A549 (cell line): ENCODE measurements at regions of chr11 and their contacts with region 1.

Region 1: DNA sequence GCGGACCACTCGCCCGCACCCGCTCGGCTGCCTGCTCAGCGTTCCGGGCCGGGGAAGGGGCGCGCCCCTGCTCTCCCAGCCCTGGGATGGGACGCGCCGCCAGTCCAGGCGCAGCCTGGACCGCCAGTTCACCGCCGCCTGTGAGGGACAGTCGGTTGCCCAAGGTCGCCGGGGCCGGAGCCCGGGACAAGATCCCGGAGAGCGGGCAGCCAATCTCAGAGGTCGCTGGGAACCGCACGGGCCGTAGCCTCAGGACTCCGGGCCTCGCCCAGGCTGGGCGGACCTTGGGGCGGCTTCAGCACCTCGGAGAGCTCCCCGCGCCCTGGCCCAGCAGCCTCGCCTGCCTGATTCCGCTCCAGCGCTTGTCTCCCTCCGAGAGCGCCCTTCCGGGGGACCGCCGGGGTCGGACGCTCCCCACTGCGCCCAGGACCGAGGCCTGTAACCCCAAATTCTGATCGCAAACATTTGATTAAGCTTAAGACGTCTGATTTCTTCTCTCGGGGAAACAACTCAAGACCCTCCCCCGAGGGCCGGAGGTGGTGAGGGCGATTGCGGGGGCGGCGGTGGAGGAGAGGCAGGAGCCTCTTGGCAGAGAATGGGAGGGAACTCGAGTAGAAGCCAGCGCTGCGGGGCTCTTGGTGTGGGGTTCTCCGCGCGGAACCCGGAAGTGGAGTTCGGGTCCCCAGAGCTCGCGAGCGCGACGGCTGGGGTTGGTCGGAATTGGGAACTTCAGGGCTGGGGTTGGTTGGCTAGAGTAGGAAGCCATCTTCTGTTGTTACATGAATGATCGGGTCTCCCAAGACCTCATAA is 1.1 kb upstream of the CHRM4 start:
- DNase-seq: peak; percentile 74 to 87
- ATAC-seq: peak; percentile 52 to 73
- H3K4me3 ChIP-seq: peak overlapping the region; percentile 59
- H3K27ac ChIP-seq: peak overlapping the region in 1 of 2 experiments; percentile 63; a peak in 1 of 6 replicates
- H3K4me1 ChIP-seq: peaks cover 18% of the 10 kb centered on the region; the same call in 2 of the 3 replicates
- CTCF ChIP-seq: no peak
- EP300 ChIP-seq: no peak
- POLR2A ChIP-seq: no peak
- RAD21 ChIP-seq: no peak

Region 2: DNA sequence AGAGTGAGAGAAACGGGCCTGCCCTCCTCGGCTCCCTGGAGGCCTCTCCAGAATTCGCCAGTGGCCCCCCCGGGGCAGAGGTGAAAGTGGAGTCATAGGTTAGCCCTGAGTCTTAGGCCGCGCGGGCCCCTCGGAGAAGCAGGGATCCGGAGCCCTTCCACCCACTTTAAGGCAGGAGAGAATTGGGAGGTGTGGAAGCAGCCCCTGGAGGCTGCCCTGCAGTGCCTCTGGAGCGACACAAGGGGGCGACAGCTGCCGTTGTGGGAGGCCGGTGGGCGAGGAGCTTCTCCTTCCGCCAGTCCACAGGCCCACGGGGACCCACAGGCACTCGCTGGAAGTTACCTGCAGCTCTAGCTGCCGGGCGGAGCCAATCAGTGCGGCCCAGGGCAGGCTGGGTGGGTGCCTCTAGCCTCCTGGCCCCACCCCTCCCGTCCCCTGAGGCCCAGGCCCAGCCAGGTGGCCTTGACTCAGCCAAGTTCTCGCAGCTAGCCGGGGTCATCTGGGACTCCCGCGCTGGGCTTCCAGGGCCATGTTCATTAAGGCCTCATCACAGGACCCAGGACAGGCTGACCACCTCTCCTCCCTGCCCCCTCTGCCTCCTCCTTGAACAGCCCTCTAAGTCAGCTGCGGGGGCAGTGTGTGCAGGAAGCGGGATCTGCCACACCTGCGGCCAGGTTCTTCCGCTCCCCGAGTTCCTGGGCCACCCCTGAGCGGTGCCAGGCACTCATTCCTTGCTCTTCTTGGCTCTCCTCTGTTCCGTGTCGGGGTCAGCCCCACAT is 40.4 kb before region 1 on chr11:
- CTCF ChIA-PET with region 1: interaction called, 15 read pairs
- POLR2A ChIA-PET with region 1: no interaction called
- DNase-seq: peak in 1 of 2 experiments; percentile 46
- ATAC-seq: peak in 1 of 2 experiments; percentile 61; a peak in 3 of 6 replicates
- H3K4me3 ChIP-seq: no peak overlapping the region
- H3K27ac ChIP-seq: no peak overlapping the region
- H3K4me1 ChIP-seq: peaks cover 13% of the 10 kb centered on the region
- CTCF ChIP-seq: peak; percentile 51
- EP300 ChIP-seq: no peak
- POLR2A ChIP-seq: no peak
- RAD21 ChIP-seq: peak; percentile 26 to 31; a peak in 3 of 5 replicates

Region 3: DNA sequence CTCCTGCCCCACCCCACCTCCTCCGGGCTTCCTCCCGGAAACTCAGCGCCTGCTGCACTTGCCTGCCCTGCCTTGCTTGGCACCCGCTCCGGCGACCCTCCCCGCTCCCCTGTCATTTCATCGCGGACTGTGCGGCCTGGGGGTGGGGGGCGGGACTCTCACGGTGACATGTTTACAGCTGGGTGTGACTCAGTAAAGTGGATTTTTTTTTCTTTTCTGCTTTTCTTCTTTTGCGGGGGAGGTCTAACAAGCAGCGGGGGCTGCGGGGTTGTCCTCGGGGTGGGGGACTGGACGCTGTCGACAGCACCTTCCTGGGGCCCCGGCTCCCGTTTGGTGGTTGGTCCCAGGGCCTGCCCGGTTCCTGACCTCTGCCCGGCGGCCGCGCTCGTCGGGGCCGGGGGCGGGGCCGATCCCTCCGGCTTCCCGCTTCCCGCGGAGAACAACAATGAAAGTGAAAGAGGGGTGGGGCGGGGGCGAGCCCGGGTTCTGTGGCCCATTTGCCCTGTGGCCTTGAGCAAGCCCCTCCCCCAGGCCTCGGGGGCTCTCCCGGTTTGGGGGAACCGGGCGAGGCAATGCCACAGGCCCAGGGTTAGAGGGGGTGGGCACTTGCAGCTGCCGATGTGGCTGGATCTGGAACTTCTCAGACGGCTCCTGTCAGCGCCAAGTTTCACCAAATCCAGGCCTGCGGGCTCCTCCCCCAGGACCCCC is 12.1 kb before region 1 on chr11:
- CTCF ChIA-PET with region 1: interaction called, 220 read pairs
- POLR2A ChIA-PET with region 1: no interaction called
- DNase-seq: no peak
- ATAC-seq: peak in 1 of 2 experiments; percentile 50; a peak in 3 of 6 replicates
- H3K4me3 ChIP-seq: peak overlapping the region; percentile 48
- H3K27ac ChIP-seq: peak overlapping the region; percentile 37 to 85
- H3K4me1 ChIP-seq: peaks cover 11% of the 10 kb centered on the region
- CTCF ChIP-seq: no peak
- EP300 ChIP-seq: no peak
- POLR2A ChIP-seq: no peak
- RAD21 ChIP-seq: no peak

Region 4: GRCh38 chr11:46410021-46410420 is 17.4 kb after region 1 on chr11:
- CTCF ChIA-PET with region 1: interaction called, 31 read pairs
- POLR2A ChIA-PET with region 1: no interaction called
- DNase-seq: peak in 1 of 2 experiments; percentile 46
- ATAC-seq: peak in 1 of 2 experiments; percentile 77; a peak in 3 of 6 replicates
- H3K4me3 ChIP-seq: no peak overlapping the region
- H3K27ac ChIP-seq: no peak overlapping the region
- H3K4me1 ChIP-seq: peaks cover 16% of the 10 kb centered on the region
- CTCF ChIP-seq: peak; percentile 7; the same call in 1 of the 3 replicates
- EP300 ChIP-seq: no peak
- POLR2A ChIP-seq: no peak
- RAD21 ChIP-seq: peak; percentile 20 to 42; a peak in 2 of 5 replicates

Region 5: GRCh38 chr11:46489661-46490560 is 97.3 kb after region 1 on chr11:
- CTCF ChIA-PET with region 1: interaction called, 35 read pairs
- POLR2A ChIA-PET with region 1: no interaction called
- DNase-seq: peak; percentile 56 to 66
- ATAC-seq: peak; percentile 96 to 98
- H3K4me3 ChIP-seq: no peak overlapping the region
- H3K27ac ChIP-seq: no peak overlapping the region
- H3K4me1 ChIP-seq: no peaks in the 10 kb centered on the region
- CTCF ChIP-seq: peak; percentile 73
- EP300 ChIP-seq: no peak
- POLR2A ChIP-seq: no peak
- RAD21 ChIP-seq: peak; percentile 56 to 61

Region 6: GRCh38 chr11:46529095-46529905 is 136.7 kb after region 1 on chr11:
- CTCF ChIA-PET with region 1: interaction called, 67 read pairs
- POLR2A ChIA-PET with region 1: no interaction called
- DNase-seq: peak; percentile 73 to 89
- ATAC-seq: peak; percentile 85 to 97
- H3K4me3 ChIP-seq: no peak overlapping the region
- H3K27ac ChIP-seq: no peak overlapping the region
- H3K4me1 ChIP-seq: no peaks in the 10 kb centered on the region
- CTCF ChIP-seq: peak; percentile 67
- EP300 ChIP-seq: no peak
- POLR2A ChIP-seq: no peak
- RAD21 ChIP-seq: peak; percentile 46 to 55; a peak in 4 of 5 replicates

Region 7: GRCh38 chr11:46616998-46617675 is 224.5 kb after region 1 on chr11 and contains the starts of genes ATG13 and HARBI1:
- CTCF ChIA-PET with region 1: interaction called, 23 read pairs
- POLR2A ChIA-PET with region 1: no interaction called
- DNase-seq: peak; percentile 86 to 92
- ATAC-seq: peak; percentile 98
- H3K4me3 ChIP-seq: peak within 1 kb of the TSS; percentile 96
- H3K27ac ChIP-seq: peak within 1 kb of the TSS; percentile 96 to 99
- H3K4me1 ChIP-seq: peaks cover 18% of the 10 kb centered on the region; the same call in 2 of the 3 replicates
- CTCF ChIP-seq: no peak
- EP300 ChIP-seq: no peak; a peak in 1 of 5 replicates
- POLR2A ChIP-seq: peak; percentile 85
- RAD21 ChIP-seq: no peak
- polyA plus RNA-seq, gene ATG13: 58.6 and 75.4 TPM in 2 replicates
- polyA plus RNA-seq, gene HARBI1: 5.6 and 6.2 TPM in 2 replicates